Activated naive CD4-positive, alpha-beta T cell treated with anti-CD3 and anti-CD28 coated beads for 36 hours (primary cell): ENCODE measurements at regions of chr3 and their contacts with region 1.

Region 1: DNA sequence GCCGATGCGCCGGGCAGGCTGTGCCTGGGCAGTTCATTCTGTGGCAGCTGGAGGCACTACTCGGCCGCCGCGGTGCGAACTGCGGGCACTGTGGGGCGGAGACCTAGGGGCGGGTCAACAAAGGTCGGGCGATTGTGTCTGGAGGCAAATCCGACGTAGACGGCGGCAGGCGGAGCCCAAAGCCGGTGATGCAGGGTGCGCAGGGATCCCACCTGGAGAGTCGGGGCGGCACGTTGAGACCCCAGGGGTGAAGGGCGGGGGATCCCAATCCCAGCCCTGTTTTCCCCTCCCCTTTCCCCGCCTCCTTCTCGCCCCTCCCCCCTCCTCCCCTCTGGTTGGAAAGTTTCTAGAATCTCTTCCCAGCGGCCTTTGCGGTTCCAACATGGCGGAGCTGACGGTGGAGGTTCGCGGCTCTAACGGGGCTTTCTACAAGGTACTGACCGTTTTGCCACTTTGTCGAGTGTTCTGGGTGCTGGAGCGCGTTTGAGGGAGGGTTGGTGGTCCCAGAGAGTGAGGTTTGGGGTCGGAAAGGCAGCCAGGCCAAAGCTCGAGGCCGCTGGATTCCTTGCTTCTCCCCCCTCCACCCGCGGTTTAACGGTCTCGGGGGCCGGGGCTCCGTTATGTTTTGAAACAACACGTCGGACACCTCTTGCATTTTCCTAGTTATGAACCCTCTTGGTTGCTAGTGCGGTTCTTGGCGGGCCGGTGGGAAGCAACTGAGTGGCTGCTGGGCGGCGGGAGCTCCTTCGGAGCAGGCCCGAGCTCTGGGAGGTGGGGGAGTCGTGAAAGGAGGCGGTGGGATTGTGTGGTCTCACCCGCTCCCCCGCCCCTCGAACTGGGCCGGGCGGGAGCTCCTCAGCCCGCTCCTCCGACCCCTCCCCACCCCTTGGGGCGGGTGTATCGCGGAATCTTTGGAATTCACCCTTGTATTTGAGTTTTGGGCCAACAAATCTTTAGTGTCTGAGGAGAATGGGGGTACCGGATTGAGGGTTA is at the start of gene FXR1:
- DNase-seq: peak; percentile 96
- H3K4me3 Mint-ChIP-seq: peak within 1 kb of the TSS; percentile 93
- H3K27ac Mint-ChIP-seq: peak within 1 kb of the TSS; percentile 98
- H3K4me1 Mint-ChIP-seq: peaks cover 57% of the 10 kb centered on the region
- H3K27me3 Mint-ChIP-seq: no peaks in the 10 kb centered on the region
- total RNA-seq, gene FXR1: 184 to 194 TPM

Region 2: DNA sequence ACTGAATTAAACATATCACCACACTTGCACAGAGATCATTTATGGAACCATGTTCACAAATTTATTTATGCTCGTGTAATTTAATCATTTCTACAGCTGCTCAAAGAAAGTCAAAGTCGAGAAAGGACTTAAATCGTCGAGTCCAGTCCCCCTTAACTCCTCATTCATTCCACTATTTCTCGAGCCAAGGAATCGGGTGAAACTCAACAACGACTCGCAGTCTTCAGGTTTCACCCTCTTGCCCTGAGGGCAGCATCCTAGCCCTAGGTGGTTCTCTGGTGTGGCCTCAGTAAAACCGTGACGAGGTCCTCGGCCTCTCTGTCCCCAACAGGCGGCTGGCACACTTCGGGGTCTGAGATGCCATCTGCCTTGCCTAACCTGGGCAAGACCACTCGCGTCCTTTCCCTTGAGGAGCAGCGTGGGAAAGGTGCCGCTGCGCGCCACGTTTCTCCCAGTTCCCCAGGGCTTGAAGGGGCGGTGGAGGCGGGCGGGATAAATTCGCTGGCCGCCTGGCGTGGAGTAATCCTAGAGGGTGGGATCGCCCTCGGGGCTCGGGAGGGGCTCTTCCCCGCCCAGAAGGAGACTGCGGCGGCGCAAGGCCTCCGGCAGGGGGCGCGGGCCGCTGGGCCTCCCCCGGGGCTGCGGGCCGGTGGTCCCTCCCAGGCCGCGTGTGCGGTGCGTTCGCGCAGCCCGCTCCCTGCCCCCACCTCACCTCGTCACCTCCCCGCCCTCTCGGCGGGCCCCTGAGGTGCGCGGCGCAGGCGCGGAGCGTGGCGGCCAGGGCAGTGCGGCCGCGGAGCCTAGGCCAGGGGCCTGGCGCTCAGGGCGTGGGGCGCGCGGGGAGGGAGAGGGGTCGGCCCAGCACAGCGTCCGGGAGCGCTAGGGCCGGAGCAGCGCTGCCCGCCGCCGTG is 1590.1 kb before region 1 on chr3 and contains the start of gene ZNF639:
- CTCF ChIA-PET with region 1: no interaction called
- intact Hi-C with region 1: loop called (anchors 10 kb)
- DNase-seq: peak; percentile 78
- H3K4me3 Mint-ChIP-seq: peak within 1 kb of the TSS; percentile 89
- H3K27ac Mint-ChIP-seq: peak within 1 kb of the TSS; percentile 93
- H3K4me1 Mint-ChIP-seq: peaks cover 26% of the 10 kb centered on the region
- H3K27me3 Mint-ChIP-seq: no peaks in the 10 kb centered on the region
- total RNA-seq, gene ZNF639: 23.3 to 26.0 TPM

Region 3: DNA sequence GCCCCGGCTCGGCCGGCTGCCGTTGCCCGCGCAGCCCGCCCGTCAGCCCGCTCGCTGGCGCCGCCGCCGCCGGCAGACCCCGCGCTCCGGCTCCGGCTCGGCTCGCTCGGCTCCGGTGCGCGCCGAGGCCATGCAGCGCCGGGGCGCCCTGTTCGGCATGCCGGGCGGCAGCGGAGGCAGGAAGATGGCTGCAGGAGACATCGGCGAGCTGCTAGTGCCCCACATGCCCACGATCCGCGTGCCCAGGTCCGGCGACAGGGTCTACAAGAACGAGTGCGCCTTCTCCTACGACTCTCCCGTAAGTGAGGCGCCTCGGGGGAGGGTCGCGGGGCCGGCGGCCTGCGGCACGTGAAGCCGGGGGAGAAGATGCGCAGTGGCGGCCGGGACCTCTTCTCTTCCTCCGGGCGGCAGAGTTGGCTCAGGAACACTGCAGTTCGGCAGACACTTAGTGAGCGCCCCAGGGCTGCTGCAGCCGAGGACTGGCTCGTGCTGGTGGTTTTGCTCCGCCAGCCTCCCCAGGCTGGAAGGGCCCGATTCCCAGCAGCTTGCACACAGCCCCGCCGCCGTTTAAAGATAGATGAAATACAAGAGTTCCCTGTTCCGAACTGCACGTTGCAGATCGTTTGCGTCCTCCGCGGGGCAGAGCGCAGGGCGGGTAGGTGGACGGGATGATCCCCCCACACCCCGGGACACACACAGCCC is 1259.4 kb before region 1 on chr3:
- CTCF ChIA-PET with region 1: no interaction called
- intact Hi-C with region 1: loop called (anchors 2 kb)
- DNase-seq: peak; percentile 72
- H3K4me3 Mint-ChIP-seq: peak overlapping the region; percentile 85
- H3K27ac Mint-ChIP-seq: peak overlapping the region; percentile 67
- H3K4me1 Mint-ChIP-seq: peaks cover 17% of the 10 kb centered on the region
- H3K27me3 Mint-ChIP-seq: peaks cover 8% of the 10 kb centered on the region

Region 4: GRCh38 chr3:180548050-180548449 is 364.6 kb before region 1 on chr3:
- CTCF ChIA-PET with region 1: no interaction called
- intact Hi-C with region 1: no loop called
- DNase-seq: no peak
- H3K4me3 Mint-ChIP-seq: no peak overlapping the region
- H3K27ac Mint-ChIP-seq: no peak overlapping the region
- H3K4me1 Mint-ChIP-seq: no peaks in the 10 kb centered on the region
- H3K27me3 Mint-ChIP-seq: peaks cover 15% of the 10 kb centered on the region

Region 5: GRCh38 chr3:180617049-180617448 is 295.6 kb before region 1 on chr3:
- CTCF ChIA-PET with region 1: no interaction called
- intact Hi-C with region 1: loop called (anchors 5 kb)
- DNase-seq: no peak
- H3K4me3 Mint-ChIP-seq: no peak overlapping the region
- H3K27ac Mint-ChIP-seq: no peak overlapping the region
- H3K4me1 Mint-ChIP-seq: no peaks in the 10 kb centered on the region
- H3K27me3 Mint-ChIP-seq: no peaks in the 10 kb centered on the region

Region 6: DNA sequence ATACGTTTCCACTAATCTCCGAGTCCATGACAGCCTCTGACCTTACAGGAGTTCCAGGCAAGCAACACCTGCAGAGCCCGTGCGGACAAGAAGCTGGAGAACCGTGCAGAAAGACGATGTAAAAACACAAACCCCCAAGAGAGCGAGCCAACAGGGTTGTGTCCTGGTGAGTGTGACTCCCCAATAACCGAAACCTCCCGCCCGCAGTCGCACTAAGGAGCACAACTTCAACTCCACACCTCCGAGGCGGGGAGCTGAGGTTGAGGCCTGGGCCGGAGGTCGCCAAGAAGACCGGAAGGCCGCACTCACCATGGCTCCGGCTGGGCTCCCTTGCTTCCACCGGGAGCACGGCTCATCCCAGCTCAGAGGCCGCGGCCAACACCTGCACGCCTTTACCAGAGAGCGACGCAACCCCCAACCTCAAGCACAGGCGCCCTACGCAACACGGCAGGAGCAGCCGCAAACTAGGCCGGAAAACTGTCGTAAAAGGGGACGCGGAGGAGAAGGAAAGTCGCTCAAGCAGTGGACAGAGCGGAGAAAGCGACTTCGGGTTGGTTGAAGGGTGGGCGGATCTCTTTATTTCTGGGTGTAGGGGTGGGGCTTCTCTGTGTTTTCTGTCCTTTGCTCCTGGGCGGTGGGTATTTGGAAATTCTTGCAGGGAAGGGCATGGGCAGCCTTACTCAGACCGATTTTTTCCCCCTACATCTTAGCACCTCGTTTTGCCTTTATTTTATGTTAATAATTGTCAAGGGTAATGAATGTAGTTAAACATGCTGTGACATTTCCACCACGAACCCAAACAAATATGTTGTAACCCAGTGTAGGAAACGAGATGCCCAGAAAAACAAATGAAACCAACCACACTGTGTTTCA is 76.9 kb after region 1 on chr3 and contains the start of gene DNAJC19:
- CTCF ChIA-PET with region 1: interaction called, 11 read pairs
- intact Hi-C with region 1: loop called (anchors 1 kb)
- DNase-seq: peak; percentile 94
- H3K4me3 Mint-ChIP-seq: peak within 1 kb of the TSS; percentile 85
- H3K27ac Mint-ChIP-seq: peak within 1 kb of the TSS; percentile 87
- H3K4me1 Mint-ChIP-seq: peaks cover 26% of the 10 kb centered on the region
- H3K27me3 Mint-ChIP-seq: no peaks in the 10 kb centered on the region
- total RNA-seq, gene DNAJC19: 72.2 to 73.8 TPM

Region 7: DNA sequence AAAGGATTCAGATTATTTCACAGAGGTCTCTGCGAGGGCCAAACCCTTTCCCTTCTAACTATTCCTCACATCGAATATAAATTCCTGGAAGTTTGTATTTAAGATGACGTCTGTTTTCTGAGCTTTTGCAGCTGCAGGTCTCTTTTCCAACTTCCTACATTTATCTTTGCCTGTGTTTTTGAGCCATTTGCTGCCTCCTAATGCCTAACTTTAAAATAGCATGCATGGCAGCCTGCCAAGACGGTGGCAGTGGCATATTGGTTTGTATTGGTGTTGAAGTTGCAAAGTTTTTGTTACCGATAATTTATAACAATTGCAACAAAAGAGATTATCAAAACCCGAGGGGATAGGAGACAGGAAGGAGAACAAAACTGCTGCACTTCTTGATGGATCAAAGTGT is 264.0 kb after region 1 on chr3:
- CTCF ChIA-PET with region 1: no interaction called
- intact Hi-C with region 1: loop called (anchors 10 kb)
- DNase-seq: peak; percentile 60
- H3K4me3 Mint-ChIP-seq: no peak overlapping the region
- H3K27ac Mint-ChIP-seq: no peak overlapping the region
- H3K4me1 Mint-ChIP-seq: no peaks in the 10 kb centered on the region
- H3K27me3 Mint-ChIP-seq: peaks cover 2% of the 10 kb centered on the region